Naive thymus-derived CD8-positive, alpha-beta T cell (primary cell): ENCODE measurements at regions of chr2 and their contacts with region 1.

Region 1: GRCh38 chr2:25286025-25286400 is 55.7 kb downstream of the DNMT3A start:
- DNase-seq: peak; percentile 43 to 88 (median 73)
- ATAC-seq: peak; percentile 98 to 100
- H3K4me3 Mint-ChIP-seq: peak overlapping the region; percentile 66 to 91 (median 78)
- H3K27ac Mint-ChIP-seq: peak overlapping the region; percentile 96 to 100 (median 99)
- H3K4me1 Mint-ChIP-seq: peaks cover 27 to 80% (median 65%) of the 10 kb centered on the region in 4 donors
- H3K27me3 Mint-ChIP-seq: no peaks in the 10 kb centered on the region

Region 2: GRCh38 chr2:24538720-24539119 is 747.3 kb before region 1 on chr2:
- POLR2A ChIA-PET with region 1: no interaction called
- DNase-seq: no peak
- ATAC-seq: no peak
- H3K4me3 Mint-ChIP-seq: peak overlapping the region in 1 of 10 donors; percentile 48
- H3K27ac Mint-ChIP-seq: no peak overlapping the region
- H3K4me1 Mint-ChIP-seq: peaks cover 34 to 65% (median 56%) of the 10 kb centered on the region in 4 donors
- H3K27me3 Mint-ChIP-seq: no peaks in the 10 kb centered on the region

Region 3: GRCh38 chr2:25265802-25266201 is 20.2 kb before region 1 on chr2:
- POLR2A ChIA-PET with region 1: interaction called, 13 read pairs
- DNase-seq: peak in 9 of 10 donors; percentile 23 to 74 (median 55)
- ATAC-seq: peak; percentile 87 to 89
- H3K4me3 Mint-ChIP-seq: peak overlapping the region in 8 of 10 donors; percentile 37 to 75 (median 60)
- H3K27ac Mint-ChIP-seq: peak overlapping the region; percentile 55 to 93 (median 84)
- H3K4me1 Mint-ChIP-seq: peaks cover 28 to 72% (median 63%) of the 10 kb centered on the region in 4 donors
- H3K27me3 Mint-ChIP-seq: no peaks in the 10 kb centered on the region

Region 4: GRCh38 chr2:25309402-25309801 is 23.4 kb after region 1 on chr2:
- POLR2A ChIA-PET with region 1: interaction called, 24 read pairs
- DNase-seq: peak; percentile 45 to 85 (median 66)
- ATAC-seq: peak; percentile 48 to 54
- H3K4me3 Mint-ChIP-seq: peak overlapping the region in 8 of 10 donors; percentile 23 to 73 (median 53)
- H3K27ac Mint-ChIP-seq: peak overlapping the region; percentile 58 to 91 (median 85)
- H3K4me1 Mint-ChIP-seq: peaks cover 50 to 98% (median 90%) of the 10 kb centered on the region in 4 donors
- H3K27me3 Mint-ChIP-seq: no peaks in the 10 kb centered on the region

Region 5: DNA sequence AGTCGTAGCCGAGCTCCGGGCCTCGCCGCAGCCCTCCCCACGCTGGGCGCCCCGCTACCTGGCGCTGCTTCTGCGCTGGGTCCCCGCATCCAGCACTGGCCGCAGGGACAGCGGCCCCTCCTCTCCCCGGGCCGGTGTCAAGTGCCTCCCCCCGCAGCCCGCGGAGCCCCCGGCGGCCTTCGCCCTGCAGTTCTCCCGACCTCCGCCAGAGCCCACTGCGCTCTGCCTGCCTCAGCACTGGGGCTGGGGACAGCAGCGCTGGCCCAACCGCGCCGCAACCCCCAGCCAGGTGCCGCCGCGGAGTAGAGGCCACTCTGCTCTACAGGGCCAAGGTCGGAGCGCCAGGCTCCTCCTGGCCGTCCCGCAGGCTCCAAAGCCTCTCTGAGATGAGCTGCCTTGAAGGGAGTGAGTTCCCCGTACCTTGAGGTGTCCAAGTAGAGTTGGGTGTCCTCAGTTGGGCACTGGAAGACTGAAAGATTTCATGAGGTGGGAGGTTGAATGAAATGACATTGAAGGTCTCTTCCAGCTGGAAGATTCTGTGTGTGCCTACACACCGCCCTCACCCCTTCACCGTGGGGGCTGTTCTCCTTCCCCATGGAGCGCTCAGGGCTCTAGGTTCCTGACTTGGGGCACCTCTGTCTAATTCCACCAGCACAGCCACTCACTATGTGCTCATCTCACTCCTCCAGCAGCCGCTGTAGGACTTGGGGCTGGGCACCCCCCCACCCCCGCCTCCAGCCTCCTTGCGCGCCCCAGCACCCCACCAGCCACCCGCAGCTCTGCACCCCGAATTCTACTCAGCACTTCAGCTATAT is 56.6 kb after region 1 on chr2:
- POLR2A ChIA-PET with region 1: interaction called, 61 read pairs
- DNase-seq: peak; percentile 74 to 88 (median 82)
- ATAC-seq: peak; percentile 80 to 87
- H3K4me3 Mint-ChIP-seq: peak overlapping the region; percentile 70 to 90 (median 81)
- H3K27ac Mint-ChIP-seq: peak overlapping the region in 6 of 10 donors; percentile 37 to 90 (median 81)
- H3K4me1 Mint-ChIP-seq: peaks cover 14 to 40% (median 28%) of the 10 kb centered on the region in 4 donors
- H3K27me3 Mint-ChIP-seq: no peaks in the 10 kb centered on the region

Region 6: DNA sequence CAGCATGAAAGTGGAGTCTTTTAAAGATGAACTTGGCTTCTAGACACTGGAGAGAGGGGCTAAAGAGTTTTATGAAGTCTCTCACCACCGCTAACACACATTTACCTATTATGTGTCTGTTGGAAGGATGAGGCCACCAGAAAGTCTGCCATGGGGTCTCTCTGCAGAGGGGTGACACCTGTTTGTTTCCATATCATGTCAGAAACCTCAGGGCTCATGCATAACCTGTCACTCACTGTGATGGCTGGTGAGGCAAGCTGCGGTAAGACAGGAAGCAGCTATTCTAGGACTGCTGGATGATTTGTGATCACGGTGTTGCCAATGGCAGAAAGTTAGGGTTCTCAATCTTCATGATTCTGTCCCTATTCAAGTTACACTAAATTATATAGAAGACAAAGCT is 116.5 kb after region 1 on chr2:
- POLR2A ChIA-PET with region 1: no interaction called
- DNase-seq: no peak
- ATAC-seq: peak; percentile 49 to 56
- H3K4me3 Mint-ChIP-seq: peak overlapping the region in 4 of 10 donors; percentile 22 to 44 (median 34)
- H3K27ac Mint-ChIP-seq: peak overlapping the region in 7 of 10 donors; percentile 4 to 74 (median 33)
- H3K4me1 Mint-ChIP-seq: peaks cover 7 to 42% (median 23%) of the 10 kb centered on the region in 4 donors
- H3K27me3 Mint-ChIP-seq: no peaks in the 10 kb centered on the region